ENCODE measurements at regions of chr5 and their contacts with region 1.

Region 1: GRCh38 chr5:41822036-41822435 is 48.2 kb downstream of the OXCT1 start:
- DNase-seq: no peak
- ATAC-seq: no peak
- H3K4me3 ChIP-seq: no peak overlapping the region
- H3K27ac ChIP-seq: no peak overlapping the region
- H3K4me1 ChIP-seq: no peaks in the 10 kb centered on the region
- H3K27me3 ChIP-seq: no peaks in the 10 kb centered on the region
- CTCF ChIP-seq: no peak
- EP300 ChIP-seq: no peak
- POLR2A ChIP-seq: no peak
- RAD21 ChIP-seq: no peak

Region 2: DNA sequence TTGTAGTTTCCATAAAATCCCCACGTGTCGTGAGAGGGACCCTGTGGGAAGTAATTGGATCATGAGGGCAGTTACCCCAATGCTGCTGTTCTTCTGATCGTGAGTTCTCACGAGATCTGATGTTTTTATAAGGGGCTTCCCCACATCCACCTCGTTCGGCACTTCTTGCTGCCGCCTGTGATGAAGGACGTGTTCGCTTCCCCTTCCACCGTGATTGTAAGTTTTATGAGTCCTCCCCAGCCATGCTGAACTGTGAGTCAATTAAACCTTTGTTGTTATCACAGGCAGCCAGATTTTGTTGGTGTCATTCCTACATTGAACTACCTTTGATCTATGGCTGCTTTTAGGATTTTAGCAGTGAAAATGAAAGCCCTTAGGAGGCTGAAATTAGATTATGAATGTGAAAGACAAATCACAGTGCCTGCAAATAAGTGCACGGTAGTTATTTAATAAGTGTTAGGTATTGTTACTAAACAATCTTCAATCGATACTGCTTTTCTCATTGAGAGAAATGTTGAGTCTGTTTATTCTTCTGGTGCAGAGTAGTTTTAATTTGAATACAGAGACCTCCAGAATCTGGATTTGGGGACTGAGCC is 540.7 kb before region 1 on chr5:
- CTCF ChIA-PET with region 1: no interaction called
- POLR2A ChIA-PET with region 1: no interaction called
- in situ Hi-C with region 1: loop called (anchors 10 kb)
- intact Hi-C with region 1: no loop called
- DNase-seq: no peak
- ATAC-seq: no peak
- H3K4me3 ChIP-seq: no peak overlapping the region
- H3K27ac ChIP-seq: no peak overlapping the region
- H3K4me1 ChIP-seq: no peaks in the 10 kb centered on the region
- H3K27me3 ChIP-seq: no peaks in the 10 kb centered on the region
- CTCF ChIP-seq: no peak
- EP300 ChIP-seq: no peak
- POLR2A ChIP-seq: no peak
- RAD21 ChIP-seq: no peak

Measured in K562 (cell line).